Left cardiac atrium (tissue), 4 donors: ENCODE measurements at regions of chr14 and their contacts with region 1.

Region 1: DNA sequence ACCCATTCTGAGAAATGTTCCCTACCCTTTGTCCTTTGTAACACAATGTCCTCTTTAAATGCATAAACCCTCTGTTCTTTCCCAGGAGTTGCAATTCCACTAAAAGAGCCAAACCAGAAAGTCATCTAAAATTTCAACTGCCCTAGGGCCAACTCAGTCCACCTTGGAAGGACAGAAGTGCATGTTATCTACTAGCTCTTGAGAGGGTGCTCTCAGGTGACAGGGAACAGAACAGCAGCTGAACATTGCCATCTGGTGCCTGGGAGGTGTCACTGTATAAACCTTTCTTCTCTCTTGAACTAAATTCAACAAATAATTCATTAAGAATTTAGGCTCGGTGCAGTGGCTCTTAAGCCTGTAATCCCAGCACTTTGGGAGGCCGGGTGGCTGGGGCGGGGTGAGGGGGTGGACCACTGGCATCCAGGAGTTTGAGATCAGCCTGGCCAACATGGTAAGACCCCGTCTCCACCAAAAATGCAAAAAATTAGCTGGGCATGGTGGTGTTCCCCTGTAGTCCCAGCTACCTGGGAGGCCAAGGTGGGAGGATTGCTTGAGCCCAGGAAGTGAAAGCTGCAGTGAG is 10.3 kb upstream of the FERMT2 start:
- DNase-seq: peak; percentile 42
- ATAC-seq: peak; percentile 92 to 95

Region 2: GRCh38 chr14:52998376-52999015 is 37.3 kb after region 1 on chr14:
- intact Hi-C with region 1: loop called in 1 of 2 experiments (anchors 2 kb)
- DNase-seq: no peak
- ATAC-seq: peak in 1 of 2 donors; percentile 60

Region 3: GRCh38 chr14:53055003-53055402 is 93.9 kb after region 1 on chr14:
- intact Hi-C with region 1: loop called in 1 of 2 experiments (anchors 5 kb)
- DNase-seq: no peak
- ATAC-seq: peak; percentile 65 to 85